ENCODE measurements at regions of chr11 and their contacts with region 1.

Region 1: GRCh38 chr11:76680518-76681425 is 10.2 kb upstream of the LRRC32 start:
- DNase-seq: peak; percentile 75 to 87 (median 83)
- ATAC-seq: peak; percentile 80 to 85
- H3K4me3 ChIP-seq: no peak overlapping the region
- H3K27ac ChIP-seq: no peak overlapping the region
- H3K4me1 ChIP-seq: no peaks in the 10 kb centered on the region
- H3K27me3 ChIP-seq: no peaks in the 10 kb centered on the region

Region 2: DNA sequence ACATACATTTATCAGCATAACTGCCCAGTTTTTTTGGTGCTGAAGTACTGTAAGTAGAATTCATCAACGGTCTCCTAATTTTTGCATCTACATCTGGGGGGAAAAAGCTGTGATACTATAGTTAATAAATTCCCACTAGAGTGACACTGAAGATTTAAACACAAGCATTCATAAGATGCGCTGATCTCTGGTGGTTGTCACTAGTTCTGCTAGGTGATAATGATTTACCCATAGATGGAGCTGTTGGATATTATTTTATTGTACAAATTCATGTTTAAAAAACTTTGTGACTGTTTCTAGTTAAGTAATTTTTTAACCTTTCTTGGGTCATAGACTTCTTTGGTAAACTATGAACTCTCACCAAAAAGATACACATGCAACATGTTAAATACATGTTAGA is 129.4 kb before region 1 on chr11:
- intact Hi-C with region 1: loop called (anchors 5 to 10 kb)
- DNase-seq: no peak
- ATAC-seq: no peak
- H3K4me3 ChIP-seq: no peak overlapping the region
- H3K27ac ChIP-seq: no peak overlapping the region
- H3K4me1 ChIP-seq: no peaks in the 10 kb centered on the region
- H3K27me3 ChIP-seq: no peaks in the 10 kb centered on the region

Region 3: GRCh38 chr11:76598426-76598839 is 82.3 kb before region 1 on chr11:
- intact Hi-C with region 1: loop called in 2 of 4 experiments (anchors 5 kb)
- DNase-seq: peak; percentile 63 to 79 (median 78)
- ATAC-seq: peak; percentile 47 to 54
- H3K4me3 ChIP-seq: no peak overlapping the region
- H3K27ac ChIP-seq: no peak overlapping the region
- H3K4me1 ChIP-seq: peaks cover 8% of the 10 kb centered on the region
- H3K27me3 ChIP-seq: no peaks in the 10 kb centered on the region

Region 4: GRCh38 chr11:76654298-76654851 is 26.4 kb before region 1 on chr11:
- intact Hi-C with region 1: no loop called
- DNase-seq: peak; percentile 81 to 90 (median 89)
- ATAC-seq: peak; percentile 75 to 84
- H3K4me3 ChIP-seq: no peak overlapping the region
- H3K27ac ChIP-seq: peak overlapping the region; percentile 55
- H3K4me1 ChIP-seq: peaks cover 7% of the 10 kb centered on the region
- H3K27me3 ChIP-seq: no peaks in the 10 kb centered on the region

Region 5: DNA sequence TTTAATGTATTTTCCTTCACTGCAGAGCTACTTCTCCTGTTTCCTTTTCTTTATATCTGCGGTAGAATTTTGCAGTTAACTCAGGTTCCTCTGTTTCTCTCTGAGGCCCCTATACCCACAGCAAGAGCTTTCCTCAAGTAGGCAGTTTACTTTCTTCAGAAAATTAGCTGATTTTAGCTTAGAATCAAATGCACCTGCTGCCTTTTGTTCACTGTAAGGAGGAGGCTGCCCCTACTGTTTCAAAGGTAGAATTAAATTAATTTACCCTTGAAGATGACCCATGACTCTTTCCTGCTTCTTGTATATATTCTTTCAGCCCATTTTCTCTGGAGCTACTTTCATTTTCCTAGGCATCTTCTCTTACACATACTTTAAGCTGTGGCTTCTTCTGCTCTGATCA is 689.5 kb after region 1 on chr11:
- intact Hi-C with region 1: no loop called
- DNase-seq: no peak
- ATAC-seq: no peak
- H3K4me3 ChIP-seq: no peak overlapping the region
- H3K27ac ChIP-seq: no peak overlapping the region
- H3K4me1 ChIP-seq: no peaks in the 10 kb centered on the region
- H3K27me3 ChIP-seq: no peaks in the 10 kb centered on the region

Region 6: GRCh38 chr11:77851503-77851902 is 1170.7 kb after region 1 on chr11:
- intact Hi-C with region 1: no loop called
- DNase-seq: no peak
- ATAC-seq: no peak
- H3K4me3 ChIP-seq: no peak overlapping the region
- H3K27ac ChIP-seq: no peak overlapping the region
- H3K4me1 ChIP-seq: no peaks in the 10 kb centered on the region
- H3K27me3 ChIP-seq: no peaks in the 10 kb centered on the region